Activated naive CD4-positive, alpha-beta T cell treated with anti-CD3 and anti-CD28 coated beads for 36 hours (primary cell): ENCODE measurements at regions of chr4 and their contacts with region 1.

Region 1: DNA sequence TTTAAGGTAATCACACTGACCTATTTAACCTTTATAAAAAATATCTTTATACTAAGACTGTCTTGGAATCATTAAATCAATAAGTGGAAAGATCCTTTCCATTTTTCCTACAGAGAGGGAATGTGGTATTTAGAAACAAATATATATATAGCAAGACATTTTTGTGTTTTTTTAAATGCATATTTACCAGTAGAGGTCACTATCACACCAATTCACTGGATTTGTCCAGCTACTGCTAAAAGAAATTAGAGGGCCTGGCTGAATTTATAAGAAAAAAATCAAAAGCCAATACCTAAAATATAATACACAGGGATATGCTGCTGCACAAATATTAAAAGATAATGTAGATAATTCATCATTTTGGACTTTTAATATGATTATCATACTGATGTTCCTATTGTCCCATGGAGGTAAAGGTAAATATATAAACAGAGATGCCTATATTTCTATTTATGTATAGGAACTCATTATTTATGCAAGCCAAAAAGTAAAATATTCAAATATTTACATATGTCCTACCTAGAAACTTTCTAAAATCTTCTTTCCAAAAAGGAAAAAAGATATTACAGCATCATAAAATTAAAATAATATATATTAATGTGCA is 69.5 kb downstream of the PDE5A start:
- DNase-seq: no peak
- H3K4me3 Mint-ChIP-seq: no peak overlapping the region
- H3K27ac Mint-ChIP-seq: no peak overlapping the region
- H3K4me1 Mint-ChIP-seq: no peaks in the 10 kb centered on the region
- H3K27me3 Mint-ChIP-seq: no peaks in the 10 kb centered on the region

Region 2: GRCh38 chr4:119570401-119570800 is 11.3 kb after region 1 on chr4:
- CTCF ChIA-PET with region 1: no interaction called
- intact Hi-C with region 1: no loop called
- DNase-seq: no peak
- H3K4me3 Mint-ChIP-seq: no peak overlapping the region
- H3K27ac Mint-ChIP-seq: no peak overlapping the region
- H3K4me1 Mint-ChIP-seq: no peaks in the 10 kb centered on the region
- H3K27me3 Mint-ChIP-seq: peaks cover 5% of the 10 kb centered on the region

Region 3: GRCh38 chr4:119663160-119663788 is 104.1 kb after region 1 on chr4:
- CTCF ChIA-PET with region 1: no interaction called
- intact Hi-C with region 1: no loop called
- DNase-seq: no peak
- H3K4me3 Mint-ChIP-seq: no peak overlapping the region
- H3K27ac Mint-ChIP-seq: no peak overlapping the region
- H3K4me1 Mint-ChIP-seq: no peaks in the 10 kb centered on the region
- H3K27me3 Mint-ChIP-seq: peaks cover 12% of the 10 kb centered on the region

Region 4: DNA sequence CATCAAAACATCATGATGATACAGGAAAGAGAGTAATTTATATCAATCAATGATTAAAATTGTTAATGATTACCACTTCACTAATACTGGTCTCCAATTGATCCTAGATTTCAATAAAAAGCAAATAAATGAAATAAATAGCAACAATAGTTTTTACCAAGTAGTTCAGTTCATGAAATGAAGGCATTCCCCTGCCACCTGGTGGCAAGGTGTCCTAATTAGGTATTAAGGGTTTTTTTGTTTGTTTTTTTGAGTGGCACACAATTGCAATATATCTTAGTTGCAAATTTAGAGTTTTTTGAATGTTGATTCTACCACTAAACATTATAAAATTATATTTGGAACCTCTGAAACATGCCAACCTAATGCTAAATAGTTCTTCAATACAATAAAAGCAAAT is 226.8 kb after region 1 on chr4:
- CTCF ChIA-PET with region 1: no interaction called
- intact Hi-C with region 1: loop called (anchors 1 kb)
- DNase-seq: peak; percentile 9
- H3K4me3 Mint-ChIP-seq: no peak overlapping the region
- H3K27ac Mint-ChIP-seq: no peak overlapping the region
- H3K4me1 Mint-ChIP-seq: no peaks in the 10 kb centered on the region
- H3K27me3 Mint-ChIP-seq: peaks cover 9% of the 10 kb centered on the region

Region 5: DNA sequence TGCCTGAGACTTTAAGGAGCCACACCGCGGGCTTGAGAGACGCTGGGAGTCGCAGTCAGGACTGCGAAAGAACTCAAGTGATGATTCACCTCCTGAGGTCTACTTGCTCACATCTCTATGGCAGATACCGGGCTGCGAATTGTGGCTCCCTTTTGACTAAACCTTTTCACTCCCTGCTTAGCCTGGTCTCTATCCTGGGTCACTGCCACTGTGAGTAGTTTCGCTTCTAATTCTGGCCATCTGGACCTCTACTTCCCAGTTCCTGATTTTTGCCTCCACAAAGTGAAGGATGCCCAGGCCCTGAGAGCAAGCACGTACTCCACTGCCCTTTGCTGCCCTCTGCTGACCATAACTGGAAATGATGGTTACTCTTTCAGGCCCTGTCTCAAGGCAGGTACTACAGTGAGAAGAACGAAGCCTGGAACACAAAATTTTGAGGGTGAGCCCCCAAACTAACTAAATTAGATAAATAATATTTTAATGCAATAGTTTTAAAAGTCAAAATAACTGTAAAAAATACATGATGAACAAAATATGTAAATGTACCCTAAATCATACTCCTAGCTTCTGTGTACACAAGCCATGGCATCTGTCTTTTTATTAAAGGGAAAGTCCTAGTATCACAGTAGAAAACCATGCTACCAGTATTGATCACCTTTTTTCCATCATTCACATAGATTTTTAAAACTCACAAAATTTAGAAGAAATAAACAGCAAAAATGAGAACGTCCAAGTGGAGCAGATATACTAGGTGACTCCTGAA is 490.8 kb after region 1 on chr4:
- CTCF ChIA-PET with region 1: interaction called, 3 read pairs
- intact Hi-C with region 1: loop called (anchors 1 kb)
- DNase-seq: peak; percentile 82
- H3K4me3 Mint-ChIP-seq: no peak overlapping the region
- H3K27ac Mint-ChIP-seq: no peak overlapping the region
- H3K4me1 Mint-ChIP-seq: peaks cover 2% of the 10 kb centered on the region
- H3K27me3 Mint-ChIP-seq: no peaks in the 10 kb centered on the region